ENCODE measurements at regions of chr2 and their contacts with region 1.

Region 1: GRCh38 chr2:70948337-70949003 is 12.8 kb downstream of the ATP6V1B1 start:
- DNase-seq: peak; percentile 33
- H3K4me3 ChIP-seq: peak overlapping the region; percentile 54
- H3K27ac ChIP-seq: no peak overlapping the region
- H3K27me3 ChIP-seq: no peaks in the 10 kb centered on the region
- CTCF ChIP-seq: peak; percentile 93

Region 2: GRCh38 chr2:70861777-70862625 is 86.5 kb before region 1 on chr2:
- CTCF ChIA-PET with region 1: interaction called, 75 read pairs
- POLR2A ChIA-PET with region 1: no interaction called
- DNase-seq: peak; percentile 51
- H3K4me3 ChIP-seq: no peak overlapping the region
- H3K27ac ChIP-seq: no peak overlapping the region
- H3K27me3 ChIP-seq: peaks cover 37% of the 10 kb centered on the region
- CTCF ChIP-seq: peak; percentile 100

Region 3: DNA sequence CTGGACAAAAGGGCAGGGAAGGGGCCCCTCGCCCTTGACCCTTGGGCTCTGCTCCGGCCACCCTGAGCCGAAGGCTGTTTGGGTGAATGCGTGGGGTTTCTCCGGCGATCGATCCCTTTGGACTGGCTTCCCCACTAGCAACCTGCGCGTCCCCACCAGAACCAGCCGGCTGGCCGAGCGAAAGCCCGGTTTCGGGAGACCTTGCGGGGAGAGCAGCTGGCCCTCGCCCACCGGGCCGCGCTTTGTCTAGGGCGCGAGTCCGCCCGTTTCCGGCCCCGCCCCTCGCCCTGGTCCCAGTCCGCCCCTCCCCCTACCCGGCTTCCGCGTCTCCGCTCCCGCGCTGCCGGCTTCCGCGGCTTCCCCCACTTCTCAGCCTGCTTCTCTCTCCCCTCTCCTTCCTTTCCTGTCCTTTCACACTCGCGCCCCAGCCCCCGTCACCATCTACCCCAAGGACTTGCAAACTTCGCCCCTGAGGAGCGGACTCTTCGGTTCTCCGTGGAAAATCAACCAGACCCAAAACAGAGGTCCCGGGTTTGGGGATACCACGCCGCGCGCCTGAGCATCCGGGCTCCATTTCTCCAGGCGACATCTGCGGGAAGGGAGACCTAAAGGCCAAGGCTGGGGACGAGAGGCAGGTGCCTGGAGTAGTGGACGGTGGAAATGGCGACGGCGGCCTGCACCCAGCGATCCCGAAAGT is 60.8 kb before region 1 on chr2:
- CTCF ChIA-PET with region 1: interaction called, 15 read pairs
- POLR2A ChIA-PET with region 1: no interaction called
- DNase-seq: no peak
- H3K4me3 ChIP-seq: peak overlapping the region; percentile 47
- H3K27ac ChIP-seq: no peak overlapping the region
- H3K27me3 ChIP-seq: peaks cover 92% of the 10 kb centered on the region
- CTCF ChIP-seq: no peak

Region 4: GRCh38 chr2:70907130-70908057 is 41.1 kb before region 1 on chr2:
- CTCF ChIA-PET with region 1: interaction called, 21 read pairs
- POLR2A ChIA-PET with region 1: no interaction called
- DNase-seq: no peak
- H3K4me3 ChIP-seq: peak overlapping the region; percentile 51
- H3K27ac ChIP-seq: no peak overlapping the region
- H3K27me3 ChIP-seq: no peaks in the 10 kb centered on the region
- CTCF ChIP-seq: no peak

Region 5: DNA sequence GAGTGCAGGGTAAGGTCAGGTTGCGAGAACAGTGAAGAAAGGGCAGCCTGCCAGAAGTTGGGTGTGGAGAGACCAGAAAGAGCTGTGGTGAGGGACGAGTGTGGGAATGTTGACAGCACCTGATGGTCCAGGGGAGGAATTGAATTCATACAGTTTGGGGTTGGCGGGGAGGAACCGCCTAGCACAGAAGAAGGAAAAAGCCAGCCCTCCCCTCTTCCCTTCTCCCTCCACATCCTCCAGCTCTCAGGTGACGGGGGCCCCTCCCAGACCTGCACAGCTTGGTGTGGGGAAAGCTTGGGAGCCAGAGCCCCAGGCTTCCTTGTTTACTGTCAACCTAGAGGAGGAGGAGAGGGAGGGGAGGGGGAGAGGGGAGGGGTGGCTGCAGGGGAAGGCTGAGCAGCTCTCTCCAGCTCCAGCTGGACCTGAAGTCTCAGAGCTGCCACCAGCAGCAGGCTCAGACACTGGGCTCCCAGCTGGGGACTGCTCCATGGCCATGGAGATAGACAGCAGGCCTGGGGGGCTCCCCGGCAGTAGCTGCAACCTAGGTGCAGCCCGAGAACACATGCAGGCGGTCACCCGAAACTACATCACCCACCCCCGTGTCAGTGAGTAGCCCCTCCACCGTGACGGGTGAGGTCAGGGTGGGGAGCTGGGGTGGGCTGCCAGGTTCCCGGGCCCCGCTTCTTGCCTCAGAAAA is 12.9 kb before region 1 on chr2 and contains the start of gene ATP6V1B1:
- CTCF ChIA-PET with region 1: interaction called, 45 read pairs
- POLR2A ChIA-PET with region 1: no interaction called
- DNase-seq: no peak
- H3K4me3 ChIP-seq: no peak within 1 kb of the TSS
- H3K27ac ChIP-seq: no peak within 1 kb of the TSS
- H3K27me3 ChIP-seq: no peaks in the 10 kb centered on the region
- CTCF ChIP-seq: no peak
- polyA plus RNA-seq, gene ATP6V1B1: 0.57 and 0.82 TPM in 2 replicates

Region 6: GRCh38 chr2:70977605-70978205 is 29.2 kb after region 1 on chr2:
- CTCF ChIA-PET with region 1: interaction called, 18 read pairs
- POLR2A ChIA-PET with region 1: no interaction called
- DNase-seq: peak; percentile 55
- H3K4me3 ChIP-seq: peak overlapping the region; percentile 64
- H3K27ac ChIP-seq: peak overlapping the region; percentile 91
- H3K27me3 ChIP-seq: no peaks in the 10 kb centered on the region
- CTCF ChIP-seq: no peak; the same call in 1 of the 2 replicates